ENCODE measurements at regions of chr6 and their contacts with region 1.

Region 1: DNA sequence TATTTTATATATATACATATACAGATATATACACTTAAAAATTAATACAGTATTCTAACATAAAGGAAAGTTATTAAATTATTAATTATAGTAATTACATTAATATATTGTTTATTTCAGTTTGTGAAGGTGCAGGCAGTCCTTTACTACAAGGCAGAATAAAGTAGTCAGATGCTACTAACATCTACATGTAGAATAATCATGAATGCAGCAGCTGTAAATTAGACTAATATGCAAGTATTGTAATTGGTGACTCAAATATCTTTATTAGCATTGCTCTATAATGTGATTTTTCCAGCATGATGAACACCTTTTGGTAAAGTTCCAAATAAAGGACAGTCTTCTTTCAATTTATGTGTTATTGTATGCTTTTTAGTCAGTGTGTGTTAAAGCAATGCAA is 17.3 kb downstream of the MYO6 start:
- DNase-seq: no peak
- ATAC-seq: no peak
- H3K4me3 ChIP-seq: no peak overlapping the region
- H3K27ac ChIP-seq: no peak overlapping the region
- H3K4me1 ChIP-seq: no peaks in the 10 kb centered on the region
- H3K27me3 ChIP-seq: no peaks in the 10 kb centered on the region
- CTCF ChIP-seq: no peak
- POLR2A ChIP-seq: no peak

Region 2: DNA sequence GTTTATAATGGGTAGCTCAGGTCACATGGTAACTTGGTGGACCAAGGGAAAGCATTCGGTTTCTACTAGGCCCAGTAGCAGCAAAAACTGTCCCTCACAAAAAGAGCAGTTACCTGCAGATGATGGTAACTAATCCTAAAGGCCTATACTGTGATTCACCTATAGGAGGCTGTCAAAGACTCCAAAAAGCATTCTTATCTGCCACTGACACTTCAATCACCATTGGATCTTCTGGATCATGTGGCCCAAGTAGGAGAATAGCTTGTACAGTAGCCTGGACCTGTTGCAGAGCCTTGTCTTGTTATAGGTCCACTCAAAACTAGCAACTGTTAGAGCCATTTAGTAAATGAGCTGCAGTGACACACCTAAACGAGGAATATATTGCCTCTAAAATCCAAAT is 249.6 kb before region 1 on chr6:
- intact Hi-C with region 1: no loop called
- DNase-seq: no peak
- ATAC-seq: no peak
- H3K4me3 ChIP-seq: no peak overlapping the region
- H3K27ac ChIP-seq: no peak overlapping the region
- H3K4me1 ChIP-seq: no peaks in the 10 kb centered on the region
- H3K27me3 ChIP-seq: no peaks in the 10 kb centered on the region
- CTCF ChIP-seq: no peak
- POLR2A ChIP-seq: no peak

Region 3: GRCh38 chr6:75802366-75802765 is 36.0 kb after region 1 on chr6:
- intact Hi-C with region 1: loop called in 1 of 10 experiments (anchors 1 kb)
- DNase-seq: no peak
- ATAC-seq: no peak
- H3K4me3 ChIP-seq: no peak overlapping the region
- H3K27ac ChIP-seq: no peak overlapping the region
- H3K4me1 ChIP-seq: no peaks in the 10 kb centered on the region
- H3K27me3 ChIP-seq: no peaks in the 10 kb centered on the region
- CTCF ChIP-seq: no peak
- POLR2A ChIP-seq: no peak

Region 4: GRCh38 chr6:75863001-75863400 is 96.6 kb after region 1 on chr6:
- intact Hi-C with region 1: no loop called
- DNase-seq: no peak
- ATAC-seq: no peak
- H3K4me3 ChIP-seq: no peak overlapping the region
- H3K27ac ChIP-seq: no peak overlapping the region
- H3K4me1 ChIP-seq: no peaks in the 10 kb centered on the region
- H3K27me3 ChIP-seq: no peaks in the 10 kb centered on the region
- CTCF ChIP-seq: no peak
- POLR2A ChIP-seq: no peak